Adrenal gland (tissue), 19 donors: ENCODE measurements at regions of chr15 and their contacts with region 1.

Region 1: GRCh38 chr15:89211730-89212129 is 9.6 kb downstream of the RLBP1 start:
- DNase-seq: no peak
- H3K4me3 ChIP-seq: no peak overlapping the region
- H3K27ac ChIP-seq: no peak overlapping the region
- H3K4me1 ChIP-seq: peaks cover 0 to 5% of the 10 kb centered on the region in 2 donors
- H3K27me3 ChIP-seq: no peaks in the 10 kb centered on the region
- CTCF ChIP-seq: no peak
- POLR2A ChIP-seq: no peak

Region 2: GRCh38 chr15:89299896-89300295 is 88.2 kb after region 1 on chr15:
- intact Hi-C with region 1: loop called in 1 of 2 experiments (anchors 10 kb)
- DNase-seq: no peak
- H3K4me3 ChIP-seq: no peak overlapping the region
- H3K27ac ChIP-seq: no peak overlapping the region
- H3K4me1 ChIP-seq: no peaks in the 10 kb centered on the region
- H3K27me3 ChIP-seq: no peaks in the 10 kb centered on the region
- CTCF ChIP-seq: peak in 3 of 6 experiments; percentile 12 to 22 (median 19)
- POLR2A ChIP-seq: no peak

Region 3: GRCh38 chr15:89430530-89431341 is 219.0 kb after region 1 on chr15:
- intact Hi-C with region 1: loop called in 1 of 2 experiments (anchors 10 kb)
- DNase-seq: peak; percentile 77 to 92 (median 83)
- H3K4me3 ChIP-seq: peak overlapping the region in 1 of 4 donors; percentile 41
- H3K27ac ChIP-seq: no peak overlapping the region
- H3K4me1 ChIP-seq: peaks cover 0 to 8% of the 10 kb centered on the region in 2 donors
- H3K27me3 ChIP-seq: peaks cover 7% of the 10 kb centered on the region
- CTCF ChIP-seq: peak; percentile 95 to 98 (median 96)
- POLR2A ChIP-seq: no peak